BJ (cell line): ENCODE measurements at regions of chr2 and their contacts with region 1.

Region 1: DNA sequence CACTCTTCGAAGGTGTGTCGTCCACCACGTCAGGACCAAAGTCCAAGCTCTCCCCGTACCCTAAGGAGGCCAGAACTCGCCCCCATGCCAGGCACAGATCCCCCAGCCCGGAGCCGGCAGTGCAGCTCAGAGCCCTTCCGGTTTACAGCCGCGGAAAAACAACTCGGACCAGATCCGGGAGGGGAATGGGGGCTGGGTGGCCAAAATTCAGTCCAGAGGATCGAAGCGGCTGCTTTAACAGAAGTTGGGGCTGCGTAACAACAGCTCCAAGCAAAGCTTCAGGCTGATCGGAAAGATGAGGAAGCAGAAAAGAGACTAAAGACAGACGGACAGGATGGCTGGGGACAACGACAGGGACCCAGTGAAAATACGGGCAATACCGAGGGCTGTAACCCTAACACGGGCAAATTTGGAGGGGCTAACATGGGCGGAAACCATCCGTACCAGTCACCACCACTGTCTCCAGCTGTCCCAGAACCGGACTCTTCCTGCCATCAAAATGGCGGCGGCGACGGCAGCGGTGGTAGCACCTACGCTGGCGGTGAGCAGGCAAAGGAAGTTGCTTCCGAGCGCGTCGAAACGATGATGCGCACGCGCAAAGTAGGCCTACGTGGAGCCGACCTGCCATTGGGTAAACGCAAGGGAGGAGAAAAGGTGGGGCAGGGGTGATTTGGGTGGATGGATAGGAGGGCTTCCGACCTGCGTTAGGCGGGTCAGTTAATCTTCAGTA is at the start of gene MMADHC:
- DNase-seq: peak; percentile 72
- H3K4me3 ChIP-seq: peak within 1 kb of the TSS; percentile 86
- H3K27me3 ChIP-seq: no peaks in the 10 kb centered on the region
- CTCF ChIP-seq: no peak
- polyA plus RNA-seq, gene MMADHC: 72.6 and 134 TPM in 2 replicates

Region 2: DNA sequence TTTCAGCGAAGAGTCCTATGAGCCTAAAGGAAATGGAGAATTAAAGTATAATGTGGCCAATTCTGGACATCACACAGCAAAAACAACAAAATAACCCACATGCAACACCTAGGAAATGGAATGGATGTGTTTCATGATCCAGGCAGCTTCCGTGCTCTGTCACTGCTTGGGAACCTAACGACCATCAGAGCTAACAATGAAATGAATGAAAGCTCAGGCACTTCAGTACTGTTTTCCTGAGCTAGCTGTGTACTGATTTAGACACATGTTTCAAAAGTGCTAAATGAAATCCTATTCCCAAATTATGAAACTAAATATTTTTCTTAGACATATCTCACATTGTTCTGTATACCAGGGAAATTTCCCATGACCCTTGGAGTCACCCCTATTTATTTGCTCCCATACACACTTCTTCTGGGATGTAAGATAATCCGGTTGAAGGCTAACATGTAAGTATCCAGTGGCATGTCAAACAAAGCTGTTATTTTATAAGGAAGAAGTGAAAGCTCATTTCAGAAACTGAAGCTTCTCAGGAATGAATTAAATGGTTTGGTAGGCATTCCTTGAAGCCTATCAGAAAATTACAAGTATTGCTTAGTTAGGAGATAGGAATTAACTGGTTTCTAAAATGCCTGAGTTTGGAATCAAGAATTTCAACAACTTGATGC is 1008.6 kb after region 1 on chr2:
- CTCF ChIA-PET with region 1: no interaction called
- POLR2A ChIA-PET with region 1: interaction called, 13 read pairs
- DNase-seq: peak; percentile 66
- H3K4me3 ChIP-seq: no peak overlapping the region
- H3K27me3 ChIP-seq: no peaks in the 10 kb centered on the region
- CTCF ChIP-seq: no peak

Region 3: GRCh38 chr2:151381291-151381874 is 1794.0 kb after region 1 on chr2:
- CTCF ChIA-PET with region 1: no interaction called
- POLR2A ChIA-PET with region 1: interaction called, 13 read pairs
- DNase-seq: no peak
- H3K4me3 ChIP-seq: no peak overlapping the region
- H3K27me3 ChIP-seq: no peaks in the 10 kb centered on the region
- CTCF ChIP-seq: no peak

Region 4: GRCh38 chr2:151409601-151410484 is 1822.5 kb after region 1 on chr2 and contains the start of gene RIF1:
- CTCF ChIA-PET with region 1: no interaction called
- POLR2A ChIA-PET with region 1: interaction called, 18 read pairs
- DNase-seq: peak; percentile 58
- H3K4me3 ChIP-seq: peak within 1 kb of the TSS; percentile 100
- H3K27me3 ChIP-seq: no peaks in the 10 kb centered on the region
- CTCF ChIP-seq: peak; percentile 86
- polyA plus RNA-seq, gene RIF1: 5.7 and 10.8 TPM in 2 replicates